ENCODE measurements at regions of chrX and their contacts with region 1.

Region 1: GRCh38 chrX:25618248-25618647 is 519.9 kb upstream of the MAGEB18 start:
- DNase-seq: no peak
- H3K4me3 ChIP-seq: no peak overlapping the region
- H3K27ac ChIP-seq: no peak overlapping the region
- H3K4me1 ChIP-seq: no peaks in the 10 kb centered on the region
- H3K27me3 ChIP-seq: no peaks in the 10 kb centered on the region
- CTCF ChIP-seq: no peak
- POLR2A ChIP-seq: no peak

Region 2: DNA sequence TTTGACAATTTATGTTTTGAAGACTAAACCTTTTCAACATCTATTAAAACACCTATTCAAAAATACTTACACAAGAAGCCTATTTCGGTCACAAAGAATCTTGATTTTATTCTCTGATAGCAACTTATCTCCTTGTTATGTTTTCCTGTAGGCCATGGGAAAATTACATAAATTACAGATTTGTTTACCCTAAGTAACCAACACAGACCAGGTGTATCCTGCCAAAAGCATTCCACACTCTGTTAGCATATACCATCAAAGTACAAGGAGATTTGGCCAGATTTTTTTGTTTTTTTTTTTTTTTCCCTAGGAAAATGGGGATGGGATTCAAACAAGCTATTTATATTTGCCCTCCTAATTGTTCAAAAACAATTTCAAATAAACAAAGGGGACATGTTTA is 22.0 kb after region 1 on chrX:
- CTCF ChIA-PET with region 1: no interaction called
- POLR2A ChIA-PET with region 1: no interaction called
- dilution Hi-C with region 1: no loop called
- intact Hi-C with region 1: loop called (anchors 1 kb)
- DNase-seq: peak; percentile 49
- H3K4me3 ChIP-seq: no peak overlapping the region
- H3K27ac ChIP-seq: no peak overlapping the region
- H3K4me1 ChIP-seq: no peaks in the 10 kb centered on the region
- H3K27me3 ChIP-seq: no peaks in the 10 kb centered on the region
- CTCF ChIP-seq: no peak
- POLR2A ChIP-seq: no peak

Region 3: GRCh38 chrX:25650216-25650820 is 32.1 kb after region 1 on chrX:
- CTCF ChIA-PET with region 1: no interaction called
- POLR2A ChIA-PET with region 1: no interaction called
- dilution Hi-C with region 1: no loop called
- intact Hi-C with region 1: no loop called
- DNase-seq: no peak
- H3K4me3 ChIP-seq: no peak overlapping the region
- H3K27ac ChIP-seq: no peak overlapping the region
- H3K4me1 ChIP-seq: no peaks in the 10 kb centered on the region
- H3K27me3 ChIP-seq: no peaks in the 10 kb centered on the region
- CTCF ChIP-seq: no peak
- POLR2A ChIP-seq: no peak

Measured in endothelial cell of umbilical vein (primary cell).